Esophagus squamous epithelium (tissue), 5 donors: ENCODE measurements at regions of chr11 and their contacts with region 1.

Region 1: GRCh38 chr11:123478352-123478987 is 48.4 kb downstream of the GRAMD1B start:
- DNase-seq: no peak
- H3K4me3 ChIP-seq: peak overlapping the region in 1 of 4 donors; percentile 11
- H3K27ac ChIP-seq: no peak overlapping the region
- H3K4me1 ChIP-seq: peaks cover 0 to 20% (median 13%) of the 10 kb centered on the region in 3 donors
- H3K27me3 ChIP-seq: peaks cover 0 to 2% (median 0%) of the 10 kb centered on the region in 4 donors
- CTCF ChIP-seq: peak in 5 of 6 experiments; percentile 63 to 77 (median 73)
- POLR2A ChIP-seq: no peak

Region 2: DNA sequence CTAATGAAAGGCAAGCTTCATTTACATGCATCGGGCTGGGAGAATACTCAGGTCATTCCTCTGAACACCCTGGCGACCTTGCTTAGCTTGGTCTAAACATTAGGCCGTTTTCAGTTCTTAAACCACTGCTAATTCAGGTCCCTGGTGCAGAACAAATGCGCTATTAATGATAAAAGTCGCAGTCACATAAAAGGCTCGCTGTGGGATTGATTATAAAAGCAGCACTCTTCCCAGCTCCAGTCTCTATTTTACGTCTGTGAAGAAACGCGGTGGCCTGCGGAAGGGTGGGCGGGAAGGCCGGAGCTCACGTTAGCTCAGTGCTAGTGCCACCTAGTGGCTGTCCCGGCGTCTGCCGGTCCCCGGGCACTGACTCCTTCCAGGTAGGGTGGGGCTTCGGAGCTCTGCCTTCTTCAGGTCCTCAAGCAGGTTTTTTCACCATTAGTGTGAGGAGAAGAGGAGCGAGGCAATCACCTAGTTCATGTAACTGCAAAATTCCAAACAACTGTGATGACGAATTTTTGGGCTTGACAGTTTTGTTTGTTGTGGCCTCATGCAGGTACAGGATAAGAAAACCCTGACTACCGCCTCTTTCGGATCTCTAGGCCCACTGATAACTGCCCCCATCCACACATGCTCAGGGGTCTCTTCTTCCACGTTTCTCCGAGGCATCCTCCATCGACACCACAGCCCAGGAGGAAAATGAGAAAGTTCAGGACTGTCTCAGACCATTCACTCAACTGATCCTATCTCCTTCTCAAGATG is 216.9 kb before region 1 on chr11:
- intact Hi-C with region 1: no loop called
- DNase-seq: no peak
- H3K4me3 ChIP-seq: peak overlapping the region in 2 of 4 donors; percentile 11 to 56
- H3K27ac ChIP-seq: no peak overlapping the region
- H3K4me1 ChIP-seq: peaks cover 0 to 15% (median 0%) of the 10 kb centered on the region in 3 donors
- H3K27me3 ChIP-seq: peaks cover 0 to 42% (median 0%) of the 10 kb centered on the region in 4 donors
- CTCF ChIP-seq: peak; percentile 72 to 91 (median 76)
- POLR2A ChIP-seq: no peak

Region 3: GRCh38 chr11:123301696-123302400 is 176.6 kb before region 1 on chr11:
- intact Hi-C with region 1: loop called (anchors 2 kb)
- DNase-seq: no peak
- H3K4me3 ChIP-seq: peak overlapping the region; percentile 8 to 72 (median 36)
- H3K27ac ChIP-seq: no peak overlapping the region
- H3K4me1 ChIP-seq: peaks cover 0 to 20% (median 6%) of the 10 kb centered on the region in 3 donors
- H3K27me3 ChIP-seq: peaks cover 0 to 69% (median 0%) of the 10 kb centered on the region in 4 donors
- CTCF ChIP-seq: peak; percentile 56 to 89 (median 85)
- POLR2A ChIP-seq: no peak

Region 4: DNA sequence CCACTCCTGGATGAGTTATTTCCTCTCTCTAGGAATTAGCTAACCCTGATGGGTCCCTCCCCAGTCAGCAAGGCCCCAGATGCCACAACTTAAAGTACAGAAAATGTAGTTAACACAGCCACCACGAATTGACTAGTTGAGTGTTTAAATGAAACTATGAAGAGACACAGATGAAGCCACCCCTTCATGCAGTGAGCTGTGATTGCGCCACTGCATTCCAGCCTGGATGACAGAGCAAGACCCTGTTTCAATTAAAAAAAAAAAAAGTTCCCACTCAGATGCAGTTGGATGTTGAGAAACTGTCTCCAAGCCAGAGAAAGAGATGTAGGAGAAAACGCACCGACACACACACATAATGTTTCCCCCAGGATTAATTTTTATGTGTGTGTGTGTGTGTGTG is 122.7 kb after region 1 on chr11:
- intact Hi-C with region 1: no loop called
- DNase-seq: no peak
- H3K4me3 ChIP-seq: no peak overlapping the region
- H3K27ac ChIP-seq: no peak overlapping the region
- H3K4me1 ChIP-seq: no peaks in the 10 kb centered on the region
- H3K27me3 ChIP-seq: no peaks in the 10 kb centered on the region
- CTCF ChIP-seq: no peak
- POLR2A ChIP-seq: no peak